ENCODE measurements at regions of chr7 and their contacts with region 1.

Region 1: DNA sequence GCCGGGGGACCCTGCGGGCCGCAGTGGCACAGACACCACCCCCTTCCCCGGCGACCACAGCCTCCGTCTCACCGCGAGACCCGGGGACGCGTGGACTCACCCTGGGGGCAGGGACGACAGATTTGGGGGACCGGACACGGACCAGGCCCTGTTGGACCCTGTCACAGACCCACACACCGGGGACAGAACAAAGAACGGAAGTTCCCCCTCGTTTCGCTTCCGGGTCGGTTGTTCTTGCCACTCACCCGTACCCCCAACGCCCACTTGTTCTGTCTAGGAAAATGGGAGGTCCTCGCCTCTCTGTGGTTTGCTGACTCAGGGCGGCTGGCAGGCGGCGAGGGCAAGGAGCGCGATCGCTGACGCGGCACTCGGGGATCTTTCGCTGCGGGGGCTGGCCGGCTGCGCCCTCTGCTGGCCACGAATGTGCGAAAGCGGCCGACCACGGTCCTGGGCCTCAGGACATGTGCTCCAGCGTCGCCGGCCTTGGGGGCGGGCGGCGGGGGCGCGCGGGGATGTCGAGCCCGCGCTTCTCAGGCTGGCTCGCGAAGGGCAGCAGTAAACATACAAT is at the start of gene ZNF3:
- DNase-seq: peak; percentile 98 to 99 (median 99)
- ATAC-seq: peak; percentile 95 to 98 (median 96)
- H3K4me3 ChIP-seq: peak within 1 kb of the TSS; percentile 75 to 100 (median 88)
- H3K27ac ChIP-seq: peak within 1 kb of the TSS; percentile 77 to 95 (median 86)
- H3K4me1 ChIP-seq: peaks cover 0 to 48% (median 28%) of the 10 kb centered on the region in 12 donors
- H3K27me3 ChIP-seq: no peaks in the 10 kb centered on the region
- CTCF ChIP-seq: peak; percentile 91 to 99 (median 96)
- POLR2A ChIP-seq: peak; percentile 5 to 64
- total RNA-seq, gene ZNF3: 11.7 to 21.2 (median 15.2) TPM

Region 2: DNA sequence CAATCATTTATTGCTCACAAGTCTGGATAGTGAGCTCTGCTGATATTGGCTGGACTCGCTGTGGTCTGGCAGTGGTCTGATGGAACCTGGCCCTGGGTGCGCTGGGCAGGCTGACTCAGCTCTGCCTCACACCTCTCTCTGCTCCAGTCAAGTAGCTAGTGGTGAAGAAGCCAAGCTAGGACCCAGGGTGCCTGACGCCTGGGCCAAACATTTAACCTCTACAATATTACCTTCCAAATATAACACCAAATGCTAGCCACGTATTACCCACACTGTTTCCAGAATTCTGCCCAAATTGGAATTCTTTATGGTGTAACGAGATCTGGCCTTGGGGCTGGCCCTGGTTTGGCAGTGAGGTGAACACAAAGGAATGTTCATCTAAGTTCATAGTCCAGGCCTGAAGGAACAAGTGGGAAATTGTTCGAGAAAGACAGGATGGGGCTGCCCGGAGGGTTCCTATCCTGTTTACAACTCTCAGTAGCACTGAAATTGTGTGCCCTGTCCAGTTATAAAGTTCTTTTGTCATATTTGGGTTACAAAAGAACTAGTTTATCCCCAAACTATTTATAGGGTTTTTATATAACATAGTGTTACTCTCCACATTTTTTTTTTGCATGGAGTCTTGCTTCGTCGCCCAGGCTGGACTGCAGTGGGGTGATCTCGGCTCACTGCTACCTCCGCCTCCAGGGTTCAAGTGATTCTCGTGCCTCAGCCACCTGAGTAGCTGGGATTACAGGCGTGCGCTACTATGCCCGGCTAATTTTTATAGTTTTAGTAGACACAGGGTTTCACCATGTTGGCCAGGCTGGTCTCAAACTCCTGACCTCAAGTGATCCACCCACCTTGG is 221.1 kb before region 1 on chr7:
- intact Hi-C with region 1: no loop called
- DNase-seq: peak in 1 of 5 donors; percentile 28
- ATAC-seq: peak in 3 of 4 donors; percentile 68 to 92 (median 74)
- H3K4me3 ChIP-seq: no peak overlapping the region
- H3K27ac ChIP-seq: peak overlapping the region in 1 of 12 donors; percentile 24
- H3K4me1 ChIP-seq: peaks cover 0 to 4% (median 0%) of the 10 kb centered on the region in 12 donors
- H3K27me3 ChIP-seq: no peaks in the 10 kb centered on the region
- CTCF ChIP-seq: no peak
- POLR2A ChIP-seq: no peak

Region 3: DNA sequence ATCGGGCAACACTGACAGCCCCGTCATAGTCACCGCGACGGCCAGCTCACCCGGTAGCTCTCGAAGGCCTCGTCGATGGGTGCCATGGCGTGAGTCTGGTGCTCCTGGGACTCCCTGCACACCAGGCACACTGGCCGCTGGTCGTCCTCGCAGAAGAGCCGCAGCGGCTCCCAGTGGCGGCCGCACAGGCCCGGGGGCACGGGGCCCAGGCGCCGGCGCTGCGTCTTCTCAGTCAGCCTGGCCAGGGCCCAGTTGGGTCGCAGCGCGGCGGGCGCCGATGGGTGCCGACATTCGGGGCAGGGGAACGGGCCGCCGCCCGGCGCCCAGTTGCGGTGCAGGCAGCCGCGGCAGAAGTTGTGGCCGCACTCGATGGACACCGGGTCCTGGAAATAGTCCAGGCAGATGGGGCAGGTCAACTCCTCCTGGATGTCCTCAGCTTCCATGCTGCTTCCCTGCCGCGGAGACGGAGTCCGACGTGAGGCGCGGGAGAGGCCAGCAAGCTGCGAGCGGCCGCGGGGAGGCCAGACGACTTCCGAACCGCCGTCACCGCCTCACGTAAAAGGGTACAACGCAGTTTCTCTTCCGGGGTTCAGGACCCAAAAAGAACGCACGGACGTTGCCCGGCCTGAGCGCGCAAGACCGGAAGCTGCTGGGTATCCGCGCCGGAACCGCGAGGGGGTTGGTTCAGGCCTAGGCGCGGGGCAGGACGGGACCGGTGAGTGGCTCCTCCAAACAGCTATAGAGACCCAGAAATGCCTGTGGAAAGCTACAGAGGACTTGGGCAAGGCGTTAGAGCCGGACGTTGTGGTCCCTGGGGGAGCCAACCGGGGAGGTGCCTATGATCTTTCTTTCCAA is 162.4 kb before region 1 on chr7 and contains the start of gene TRIM4:
- intact Hi-C with region 1: loop called in 5 of 10 experiments (anchors 2 to 10 kb)
- DNase-seq: peak; percentile 92 to 95 (median 95)
- ATAC-seq: peak; percentile 99 to 100 (median 99)
- H3K4me3 ChIP-seq: peak within 1 kb of the TSS; percentile 57 to 97 (median 81)
- H3K27ac ChIP-seq: peak within 1 kb of the TSS; percentile 51 to 97 (median 92)
- H3K4me1 ChIP-seq: peaks cover 9 to 42% (median 31%) of the 10 kb centered on the region in 12 donors
- H3K27me3 ChIP-seq: no peaks in the 10 kb centered on the region
- CTCF ChIP-seq: peak in 5 of 12 donors; percentile 13 to 45 (median 41)
- POLR2A ChIP-seq: peak in 1 of 2 donors; percentile 88
- total RNA-seq, gene TRIM4: 4.7 to 13.5 (median 7.3) TPM

Region 4: GRCh38 chr7:99975782-99976521 is 105.7 kb before region 1 on chr7 and contains the start of gene AZGP1:
- intact Hi-C with region 1: loop called in 1 of 10 experiments (anchors 5 kb)
- DNase-seq: peak in 4 of 5 donors; percentile 48 to 77 (median 60)
- ATAC-seq: peak; percentile 87 to 93 (median 92)
- H3K4me3 ChIP-seq: peak within 1 kb of the TSS in 10 of 12 donors; percentile 12 to 49 (median 24)
- H3K27ac ChIP-seq: peak within 1 kb of the TSS in 9 of 12 donors; percentile 29 to 79 (median 60)
- H3K4me1 ChIP-seq: peaks cover 0 to 6% (median 0%) of the 10 kb centered on the region in 12 donors
- H3K27me3 ChIP-seq: peaks cover 0 to 4% (median 0%) of the 10 kb centered on the region in 9 donors
- CTCF ChIP-seq: no peak
- POLR2A ChIP-seq: peak in 1 of 2 donors; percentile 38
- total RNA-seq, gene AZGP1: 31.8 to 214 (median 95.4) TPM

Region 5: GRCh38 chr7:99997545-99998137 is 84.0 kb before region 1 on chr7:
- intact Hi-C with region 1: loop called in 6 of 10 experiments (anchors 2 to 5 kb)
- DNase-seq: peak; percentile 42 to 86 (median 65)
- ATAC-seq: peak; percentile 53 to 79 (median 74)
- H3K4me3 ChIP-seq: peak overlapping the region; percentile 35 to 75 (median 60)
- H3K27ac ChIP-seq: peak overlapping the region; percentile 59 to 90 (median 81)
- H3K4me1 ChIP-seq: peaks cover 0 to 21% (median 11%) of the 10 kb centered on the region in 12 donors
- H3K27me3 ChIP-seq: no peaks in the 10 kb centered on the region
- CTCF ChIP-seq: peak in 11 of 12 donors; percentile 16 to 58 (median 31)
- POLR2A ChIP-seq: peak in 1 of 2 donors; percentile 37

Region 6: GRCh38 chr7:100101016-100101862 is 19.6 kb after region 1 on chr7 and contains the starts of genes AP4M1 and MCM7:
- intact Hi-C with region 1: loop called in 2 of 10 experiments (anchors 1 to 2 kb)
- DNase-seq: peak; percentile 99
- ATAC-seq: peak; percentile 94 to 96 (median 96)
- H3K4me3 ChIP-seq: peak within 1 kb of the TSS; percentile 59 to 93 (median 76)
- H3K27ac ChIP-seq: peak within 1 kb of the TSS; percentile 81 to 97 (median 93)
- H3K4me1 ChIP-seq: peaks cover 0 to 28% (median 21%) of the 10 kb centered on the region in 12 donors
- H3K27me3 ChIP-seq: no peaks in the 10 kb centered on the region
- CTCF ChIP-seq: no peak
- POLR2A ChIP-seq: peak in 1 of 2 donors; percentile 40
- total RNA-seq, gene AP4M1: 8.9 to 19.3 (median 12.3) TPM
- total RNA-seq, gene MCM7: 12.8 to 34.4 (median 17.2) TPM

Region 7: GRCh38 chr7:100148559-100149350 is 67.1 kb after region 1 on chr7 and contains the start of gene LAMTOR4:
- intact Hi-C with region 1: no loop called
- DNase-seq: peak; percentile 99 to 100 (median 99)
- ATAC-seq: peak; percentile 99 to 100 (median 100)
- H3K4me3 ChIP-seq: peak within 1 kb of the TSS; percentile 61 to 97 (median 81)
- H3K27ac ChIP-seq: peak within 1 kb of the TSS; percentile 67 to 89 (median 84)
- H3K4me1 ChIP-seq: peaks cover 0 to 50% (median 12%) of the 10 kb centered on the region in 12 donors
- H3K27me3 ChIP-seq: no peaks in the 10 kb centered on the region
- CTCF ChIP-seq: no peak
- POLR2A ChIP-seq: peak in 1 of 2 donors; percentile 94
- total RNA-seq, gene LAMTOR4: 64.6 to 160 (median 91.7) TPM

Measured in heart left ventricle (tissue), 16 donors.